ENCODE measurements at regions of chr1 and their contacts with region 1.

Region 1: GRCh38 chr1:32619701-32620485 is 30.5 kb downstream of the ZBTB8OS start:
- DNase-seq: no peak
- ATAC-seq: peak in 1 of 4 donors; percentile 17
- H3K4me3 ChIP-seq: no peak overlapping the region
- H3K27ac ChIP-seq: no peak overlapping the region
- H3K4me1 ChIP-seq: no peaks in the 10 kb centered on the region
- H3K27me3 ChIP-seq: no peaks in the 10 kb centered on the region
- CTCF ChIP-seq: no peak

Region 2: GRCh38 chr1:32351399-32352238 is 268.3 kb before region 1 on chr1:
- intact Hi-C with region 1: no loop called
- DNase-seq: peak; percentile 97
- ATAC-seq: peak; percentile 92 to 93 (median 93)
- H3K4me3 ChIP-seq: peak overlapping the region; percentile 83
- H3K27ac ChIP-seq: peak overlapping the region; percentile 92
- H3K4me1 ChIP-seq: peaks cover 17% of the 10 kb centered on the region
- H3K27me3 ChIP-seq: no peaks in the 10 kb centered on the region
- CTCF ChIP-seq: no peak

Region 3: DNA sequence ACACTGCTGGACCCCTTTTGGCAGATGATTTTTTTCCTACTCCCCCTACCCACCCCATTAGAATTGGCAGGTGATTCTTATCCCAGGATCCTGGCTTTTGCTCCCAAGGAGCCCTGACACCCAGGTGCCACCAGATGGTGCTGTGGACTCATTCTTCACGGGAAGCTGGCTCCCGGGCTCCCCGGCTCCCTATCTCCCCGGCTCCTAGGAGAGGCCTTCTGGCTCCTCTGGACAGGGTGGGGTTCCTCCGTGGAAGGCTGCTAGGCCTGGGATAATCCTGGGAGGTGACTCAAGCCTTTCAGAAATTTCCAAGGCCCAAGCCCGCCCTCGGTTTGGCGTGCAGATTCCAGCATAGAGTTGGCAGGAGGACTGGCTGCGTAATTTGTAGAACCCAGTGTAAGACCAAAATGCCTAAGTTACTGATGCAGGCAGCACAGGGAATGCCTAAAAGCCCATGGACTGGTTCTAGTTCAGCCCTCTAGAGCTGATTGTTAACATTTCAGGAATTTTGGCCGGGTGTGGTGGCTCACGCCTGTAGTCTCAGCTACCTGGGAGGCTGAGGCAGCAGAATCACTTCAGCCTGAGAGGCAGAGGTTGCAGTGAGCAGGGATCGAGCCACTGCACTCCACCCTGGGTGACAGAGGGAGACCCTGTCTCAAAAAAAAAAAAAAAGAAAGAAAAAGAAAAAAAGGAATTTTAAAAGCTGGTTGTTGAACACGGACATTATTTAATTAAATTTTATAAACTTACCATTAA is 218.8 kb before region 1 on chr1:
- intact Hi-C with region 1: loop called in 1 of 2 experiments (anchors 5 kb)
- DNase-seq: peak; percentile 86 to 93
- ATAC-seq: peak; percentile 91 to 99 (median 96)
- H3K4me3 ChIP-seq: peak overlapping the region; percentile 36
- H3K27ac ChIP-seq: no peak overlapping the region
- H3K4me1 ChIP-seq: no peaks in the 10 kb centered on the region
- H3K27me3 ChIP-seq: no peaks in the 10 kb centered on the region
- CTCF ChIP-seq: peak; percentile 87

Region 4: DNA sequence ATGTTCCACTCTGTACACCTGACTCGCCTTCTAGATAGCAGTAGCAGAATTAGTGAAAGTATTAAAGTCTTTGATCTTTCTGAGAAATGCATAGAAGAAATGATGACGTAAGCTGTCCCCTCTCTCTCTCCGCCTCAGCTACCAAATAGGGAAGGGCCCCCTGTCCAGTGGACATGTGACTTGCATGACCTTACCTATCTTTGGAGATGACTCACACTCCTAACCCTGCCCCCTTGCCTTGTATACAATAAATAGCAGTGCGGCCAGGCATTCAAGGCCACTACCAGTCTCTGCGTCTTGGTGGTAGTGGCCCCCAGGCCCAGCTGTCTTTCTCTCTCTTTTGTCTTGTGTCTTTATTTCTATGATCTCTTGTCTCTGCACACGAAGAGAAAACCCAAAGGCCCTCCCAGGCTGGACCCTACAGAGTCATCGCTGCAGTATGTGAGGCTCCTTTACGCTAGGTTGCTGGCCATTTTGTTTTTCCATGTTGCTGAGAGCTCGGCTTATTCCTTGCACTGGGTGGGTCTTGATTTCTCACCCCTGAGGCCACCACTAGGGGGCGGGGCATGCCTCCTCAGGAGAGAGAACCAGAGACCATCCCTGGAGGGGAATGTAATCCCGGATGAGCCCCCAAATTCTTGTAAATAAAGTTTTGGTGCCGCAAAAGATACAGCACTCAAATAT is 171.0 kb before region 1 on chr1:
- intact Hi-C with region 1: loop called in 1 of 2 experiments (anchors 10 kb)
- DNase-seq: no peak
- ATAC-seq: no peak
- H3K4me3 ChIP-seq: no peak overlapping the region
- H3K27ac ChIP-seq: no peak overlapping the region
- H3K4me1 ChIP-seq: no peaks in the 10 kb centered on the region
- H3K27me3 ChIP-seq: no peaks in the 10 kb centered on the region
- CTCF ChIP-seq: peak; percentile 6

Measured in psoas muscle (tissue), 8 donors.